AG04449 (cell line): ENCODE measurements at regions of chr10 and their contacts with region 1.

Region 1: DNA sequence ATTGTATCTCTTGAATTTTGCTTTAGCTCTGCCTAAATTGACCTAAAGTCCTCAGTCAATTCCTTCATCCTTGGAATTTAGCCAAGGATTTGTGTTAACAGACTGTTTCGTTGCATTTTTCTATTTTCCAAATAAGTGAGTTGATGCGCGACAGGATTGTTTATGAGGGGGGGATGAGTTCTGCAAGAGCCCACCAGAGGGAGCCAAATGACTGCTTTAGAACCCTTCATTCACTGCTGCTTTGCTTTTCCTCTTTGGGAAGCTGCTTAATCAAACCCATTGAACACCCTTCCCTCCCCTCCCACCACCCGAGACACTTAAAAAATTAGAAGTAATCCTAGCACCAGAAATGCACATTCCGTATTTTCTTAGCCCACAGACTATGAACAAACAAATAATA is 33.7 kb upstream of the PTF1A start:
- DNase-seq: peak; percentile 21
- H3K4me3 ChIP-seq: no peak overlapping the region
- CTCF ChIP-seq: peak; percentile 86

Region 2: GRCh38 chr10:23171223-23171876 is 13.0 kb after region 1 on chr10:
- CTCF ChIA-PET with region 1: interaction called, 41 read pairs
- POLR2A ChIA-PET with region 1: no interaction called
- DNase-seq: no peak
- H3K4me3 ChIP-seq: no peak overlapping the region
- CTCF ChIP-seq: no peak

Region 3: GRCh38 chr10:23192737-23193434 is 34.5 kb after region 1 on chr10:
- CTCF ChIA-PET with region 1: no interaction called
- POLR2A ChIA-PET with region 1: no interaction called
- DNase-seq: no peak
- H3K4me3 ChIP-seq: no peak overlapping the region
- CTCF ChIP-seq: no peak

Region 4: GRCh38 chr10:23293145-23293724 is 134.9 kb after region 1 on chr10:
- CTCF ChIA-PET with region 1: interaction called, 67 read pairs
- POLR2A ChIA-PET with region 1: no interaction called
- DNase-seq: no peak
- H3K4me3 ChIP-seq: no peak overlapping the region
- CTCF ChIP-seq: peak; percentile 44

Region 5: DNA sequence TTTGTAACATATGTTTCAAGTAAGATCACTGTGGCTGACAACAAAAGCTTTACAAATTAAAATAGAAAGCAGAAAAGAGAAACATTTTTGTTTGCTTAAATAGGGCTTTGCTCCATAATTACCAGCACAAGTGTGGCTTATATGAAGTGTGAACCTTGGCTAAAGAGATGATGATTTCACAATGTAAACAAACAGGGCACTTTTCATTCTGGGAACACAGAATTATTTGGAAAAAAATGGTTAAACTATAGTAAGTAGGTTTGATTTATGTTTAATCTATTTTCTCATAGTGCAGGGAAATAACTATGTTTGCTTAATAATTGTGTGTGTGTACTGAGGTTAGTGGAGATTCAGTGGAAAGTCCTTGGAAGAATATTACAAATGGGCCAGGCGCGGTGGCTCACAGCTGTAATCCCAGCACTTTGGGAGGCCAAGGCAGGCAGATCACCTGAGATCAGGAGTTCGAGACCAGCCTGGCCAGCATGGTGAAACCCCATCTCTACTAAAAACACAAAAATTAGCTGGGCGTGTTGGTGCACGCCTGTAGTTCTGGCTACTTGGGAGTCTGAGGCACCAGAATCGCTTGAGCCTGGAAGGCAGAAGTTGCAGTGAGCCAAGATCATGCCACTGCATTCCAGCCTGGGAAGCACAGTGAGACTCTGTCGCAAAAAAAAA is 261.4 kb after region 1 on chr10:
- CTCF ChIA-PET with region 1: no interaction called
- POLR2A ChIA-PET with region 1: no interaction called
- DNase-seq: no peak
- H3K4me3 ChIP-seq: no peak overlapping the region
- CTCF ChIP-seq: no peak

Region 6: GRCh38 chr10:23525406-23525805 is 367.0 kb after region 1 on chr10:
- CTCF ChIA-PET with region 1: interaction called, 29 read pairs
- POLR2A ChIA-PET with region 1: no interaction called
- DNase-seq: no peak
- H3K4me3 ChIP-seq: no peak overlapping the region
- CTCF ChIP-seq: peak; percentile 14

Region 7: DNA sequence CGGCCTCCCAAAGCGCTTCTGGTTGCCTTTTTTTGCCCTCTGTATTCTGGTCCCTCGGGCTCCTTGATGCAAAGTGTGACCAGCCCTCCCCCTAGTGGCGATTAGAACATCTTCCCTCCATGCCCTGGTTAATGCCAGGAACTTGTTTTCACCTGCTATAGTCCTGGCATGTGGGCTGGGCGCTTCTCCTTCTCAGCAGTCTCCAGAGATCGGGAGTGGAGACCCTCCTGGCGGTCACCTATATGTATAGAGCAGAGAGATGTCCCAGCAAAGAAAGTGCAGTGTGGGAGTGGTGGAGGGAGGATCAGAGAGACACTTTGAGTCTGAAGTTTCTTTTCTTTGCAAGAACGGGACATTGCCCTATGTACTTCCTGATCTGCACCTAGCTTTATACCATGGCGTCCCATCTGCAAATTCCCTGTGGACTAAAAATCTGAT is 544.6 kb after region 1 on chr10:
- CTCF ChIA-PET with region 1: interaction called, 15 read pairs
- POLR2A ChIA-PET with region 1: no interaction called
- DNase-seq: peak; percentile 14
- H3K4me3 ChIP-seq: no peak overlapping the region
- CTCF ChIP-seq: peak; percentile 71

Region 8: DNA sequence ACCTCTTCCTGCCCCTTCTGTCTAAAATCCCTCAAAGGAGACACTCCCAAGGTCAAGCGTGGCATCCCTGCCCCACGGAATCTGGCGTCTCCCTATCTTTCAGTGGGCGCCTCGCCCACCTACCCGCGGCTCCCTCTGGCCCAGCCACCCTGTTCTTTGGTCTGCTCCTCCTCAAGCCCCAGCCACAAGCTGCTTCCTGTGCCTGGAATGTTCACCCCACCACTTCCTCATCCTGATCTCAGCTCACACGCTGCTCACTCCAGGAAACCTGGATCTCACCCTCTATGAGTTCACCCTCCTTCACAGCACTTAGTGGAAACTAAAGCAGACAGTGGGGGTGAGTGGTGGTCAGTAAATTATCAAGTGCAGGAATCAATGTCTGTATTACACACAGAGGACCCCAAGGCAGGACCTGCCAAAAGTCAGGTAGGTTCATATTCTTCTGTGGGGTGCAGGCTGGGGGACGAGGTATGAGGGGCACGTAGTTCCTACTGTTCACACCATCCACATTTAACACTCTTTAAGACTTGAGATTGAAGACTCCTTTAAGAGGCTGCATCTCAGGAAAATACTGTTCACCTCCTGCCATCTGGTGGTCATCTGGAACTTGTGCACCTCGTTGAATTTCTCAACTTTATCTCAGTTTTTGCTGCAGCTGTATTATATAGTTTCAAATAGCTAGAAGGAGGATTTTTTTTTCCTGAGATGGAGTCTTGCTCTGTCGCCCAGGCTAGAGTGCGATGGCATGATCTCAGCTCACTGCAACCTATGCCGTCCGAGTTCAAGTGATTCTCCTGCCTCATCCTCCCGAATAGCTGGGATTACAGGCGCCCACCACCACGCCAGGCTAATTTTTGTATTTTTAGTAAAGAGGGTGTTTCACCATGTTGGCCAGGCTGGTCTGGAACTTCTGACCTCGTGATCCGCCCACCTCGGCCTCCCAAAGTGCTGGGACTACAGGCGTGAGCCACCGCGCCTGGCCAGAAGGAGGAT is 1398.7 kb after region 1 on chr10:
- CTCF ChIA-PET with region 1: interaction called, 16 read pairs
- POLR2A ChIA-PET with region 1: no interaction called
- DNase-seq: peak; percentile 59
- H3K4me3 ChIP-seq: no peak overlapping the region
- CTCF ChIP-seq: peak; percentile 70